OCI-LY7 (cell line): ENCODE measurements at regions of chr6 and their contacts with region 1.

Region 1: GRCh38 chr6:106077170-106077569 is 9.0 kb upstream of the PRDM1 start:
- DNase-seq: no peak
- H3K4me3 ChIP-seq: no peak overlapping the region
- H3K27ac ChIP-seq: no peak overlapping the region
- H3K4me1 ChIP-seq: peaks cover 15% of the 10 kb centered on the region
- CTCF ChIP-seq: no peak

Region 2: DNA sequence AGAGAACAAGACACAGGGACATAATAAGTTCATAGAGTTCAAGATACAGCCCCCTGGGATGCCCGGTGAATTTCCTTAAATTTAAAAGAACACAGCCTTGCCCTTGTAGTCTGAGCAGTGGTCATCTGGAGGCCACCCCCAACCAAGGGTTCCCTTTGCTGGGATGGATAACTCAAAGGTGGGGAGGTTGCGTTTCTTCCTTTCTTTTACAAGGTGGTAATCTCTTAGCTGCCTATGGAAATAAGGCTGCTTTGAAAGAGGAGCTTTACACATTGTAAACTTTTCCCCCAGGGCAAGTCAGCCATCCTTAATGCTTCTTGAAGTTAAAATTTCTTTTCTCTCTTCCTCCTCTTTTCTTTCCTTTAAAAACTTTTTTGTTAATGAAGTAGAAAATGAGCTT is 62.2 kb before region 1 on chr6:
- CTCF ChIA-PET with region 1: no interaction called
- POLR2A ChIA-PET with region 1: interaction called, 3 read pairs
- intact Hi-C with region 1: loop called (anchors 5 kb)
- DNase-seq: no peak
- H3K4me3 ChIP-seq: no peak overlapping the region
- H3K27ac ChIP-seq: no peak overlapping the region
- H3K4me1 ChIP-seq: no peaks in the 10 kb centered on the region
- CTCF ChIP-seq: no peak